ENCODE measurements at regions of chr17 and their contacts with region 1.

Region 1: GRCh38 chr17:50707289-50708049 is at the start of gene ANKRD40:
- DNase-seq: peak; percentile 94
- H3K4me3 ChIP-seq: peak within 1 kb of the TSS; percentile 87 to 95 (median 88)
- H3K27ac ChIP-seq: peak within 1 kb of the TSS; percentile 98
- H3K4me1 ChIP-seq: peaks cover 14% of the 10 kb centered on the region
- H3K27me3 ChIP-seq: no peaks in the 10 kb centered on the region
- CTCF ChIP-seq: no peak
- total RNA-seq, gene ANKRD40: 36.3 to 38.5 TPM

Region 2: GRCh38 chr17:50689956-50690886 is 17.2 kb before region 1 on chr17:
- CTCF ChIA-PET with region 1: interaction called, 10 read pairs
- dilution Hi-C with region 1: no loop called
- in situ Hi-C with region 1: no loop called
- intact Hi-C with region 1: no loop called
- DNase-seq: peak; percentile 66
- H3K4me3 ChIP-seq: no peak overlapping the region
- H3K27ac ChIP-seq: no peak overlapping the region
- H3K4me1 ChIP-seq: peaks cover 33% of the 10 kb centered on the region
- H3K27me3 ChIP-seq: no peaks in the 10 kb centered on the region
- CTCF ChIP-seq: no peak

Region 3: GRCh38 chr17:50719144-50719923 is 11.9 kb after region 1 on chr17 and contains the start of gene LUC7L3:
- CTCF ChIA-PET with region 1: no interaction called
- dilution Hi-C with region 1: no loop called
- in situ Hi-C with region 1: no loop called
- intact Hi-C with region 1: loop called (anchors 1 kb)
- DNase-seq: peak; percentile 95
- H3K4me3 ChIP-seq: peak within 1 kb of the TSS; percentile 85 to 99 (median 86)
- H3K27ac ChIP-seq: peak within 1 kb of the TSS; percentile 97
- H3K4me1 ChIP-seq: peaks cover 18% of the 10 kb centered on the region
- H3K27me3 ChIP-seq: no peaks in the 10 kb centered on the region
- CTCF ChIP-seq: no peak
- total RNA-seq, gene LUC7L3: 13.5 to 83.9 TPM